AG04449 (cell line): ENCODE measurements at regions of chr1 and their contacts with region 1.

Region 1: DNA sequence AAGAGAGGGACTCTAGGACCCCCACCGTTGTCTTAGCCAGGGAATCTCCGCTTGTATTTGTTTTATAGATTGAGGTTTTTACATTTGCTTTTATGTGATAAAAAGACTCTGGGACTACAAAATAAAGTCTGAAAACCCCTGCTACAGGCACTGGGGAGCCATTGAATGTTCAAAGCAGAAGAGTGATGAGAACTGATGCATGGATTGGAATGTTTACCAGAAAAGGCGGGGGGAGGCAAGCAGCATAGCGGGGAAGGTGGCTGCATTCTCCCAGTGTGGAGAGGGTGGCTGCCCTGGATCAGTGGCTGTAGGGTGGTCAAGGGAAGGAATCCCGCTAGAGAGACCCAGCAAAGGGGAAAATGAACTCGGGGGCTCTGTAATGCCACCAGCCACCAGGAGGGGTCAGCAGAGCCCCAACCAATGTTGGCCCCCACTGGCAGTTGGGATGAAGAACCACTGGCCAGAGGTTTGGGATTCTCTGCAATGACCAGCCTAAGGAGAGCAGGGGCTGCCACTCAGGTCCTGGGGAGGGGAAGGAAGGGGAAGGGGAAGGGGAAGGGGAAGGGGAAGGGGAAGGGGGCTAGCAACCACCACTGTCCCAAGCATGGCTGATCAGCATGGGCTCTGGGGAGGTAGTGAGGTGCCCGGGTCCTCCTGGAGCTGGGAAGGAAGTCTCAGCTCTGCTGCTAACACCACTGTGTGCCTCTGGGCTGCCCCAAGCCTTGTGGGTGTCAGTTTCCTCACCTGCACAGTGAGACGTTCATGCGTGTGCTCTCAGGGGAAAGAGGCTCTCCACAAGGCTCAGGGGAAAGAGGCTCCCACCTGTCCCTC is 19.2 kb upstream of the PEF1 start:
- DNase-seq: no peak
- H3K4me3 ChIP-seq: no peak overlapping the region
- CTCF ChIP-seq: peak; percentile 86

Region 2: DNA sequence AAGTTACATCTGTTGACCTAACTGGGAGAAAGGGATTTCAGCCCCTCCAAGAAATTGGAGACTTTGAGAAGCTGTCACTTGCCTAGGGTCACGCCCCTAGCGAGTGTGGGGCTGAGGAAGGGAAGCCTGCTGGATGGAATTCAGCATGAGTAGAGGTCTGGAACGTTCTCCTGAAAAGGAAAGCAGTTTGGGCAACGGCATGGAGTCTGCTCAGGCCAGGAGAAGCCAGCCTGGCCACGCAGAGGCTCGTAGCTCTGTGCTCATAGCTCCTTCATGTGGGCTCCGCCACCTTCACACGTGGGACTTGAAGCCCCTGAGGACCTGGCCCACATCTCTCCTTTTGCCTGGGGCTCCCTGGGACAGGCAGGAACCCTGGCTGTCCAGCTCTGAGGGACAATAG is 17.6 kb after region 1 on chr1:
- CTCF ChIA-PET with region 1: interaction called, 33 read pairs
- POLR2A ChIA-PET with region 1: no interaction called
- DNase-seq: no peak
- H3K4me3 ChIP-seq: no peak overlapping the region
- CTCF ChIP-seq: no peak

Region 3: GRCh38 chr1:31705080-31705866 is 41.4 kb after region 1 on chr1:
- CTCF ChIA-PET with region 1: interaction called, 43 read pairs
- POLR2A ChIA-PET with region 1: interaction called, 3 read pairs
- DNase-seq: no peak
- H3K4me3 ChIP-seq: peak overlapping the region; percentile 80
- CTCF ChIP-seq: peak; percentile 61

Region 4: DNA sequence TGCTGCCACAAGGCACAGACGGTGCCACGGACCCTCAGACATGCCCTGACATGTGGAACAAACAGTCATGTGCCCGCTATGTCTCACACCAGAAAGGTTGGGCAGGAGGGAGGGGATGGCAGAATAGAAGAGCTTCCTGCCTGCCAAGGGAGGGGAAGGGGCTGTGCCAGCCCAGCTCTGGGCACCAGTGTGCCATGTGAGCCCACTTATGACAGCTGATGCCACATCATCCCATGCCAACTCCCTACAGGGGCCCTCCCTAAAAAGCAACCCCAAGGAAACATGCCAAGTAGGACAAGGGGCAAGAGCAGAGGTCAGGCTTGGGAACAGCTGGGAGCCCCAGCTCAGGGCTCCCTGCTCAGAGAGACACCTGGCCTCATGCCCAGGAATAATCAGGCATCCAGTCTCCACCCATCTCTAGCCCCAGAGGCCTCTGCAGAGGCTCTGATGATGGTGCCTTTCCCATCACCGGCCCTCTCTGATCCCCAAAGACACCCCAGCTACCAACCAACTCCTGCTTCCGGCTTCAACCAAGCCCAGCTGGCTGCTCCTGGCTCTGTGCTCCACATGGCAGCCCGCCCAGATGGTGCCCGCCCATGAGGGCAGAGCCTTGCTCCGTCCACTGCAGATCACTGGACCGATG is 90.0 kb after region 1 on chr1:
- CTCF ChIA-PET with region 1: interaction called, 107 read pairs
- POLR2A ChIA-PET with region 1: no interaction called
- DNase-seq: no peak
- H3K4me3 ChIP-seq: no peak overlapping the region
- CTCF ChIP-seq: no peak

Region 5: DNA sequence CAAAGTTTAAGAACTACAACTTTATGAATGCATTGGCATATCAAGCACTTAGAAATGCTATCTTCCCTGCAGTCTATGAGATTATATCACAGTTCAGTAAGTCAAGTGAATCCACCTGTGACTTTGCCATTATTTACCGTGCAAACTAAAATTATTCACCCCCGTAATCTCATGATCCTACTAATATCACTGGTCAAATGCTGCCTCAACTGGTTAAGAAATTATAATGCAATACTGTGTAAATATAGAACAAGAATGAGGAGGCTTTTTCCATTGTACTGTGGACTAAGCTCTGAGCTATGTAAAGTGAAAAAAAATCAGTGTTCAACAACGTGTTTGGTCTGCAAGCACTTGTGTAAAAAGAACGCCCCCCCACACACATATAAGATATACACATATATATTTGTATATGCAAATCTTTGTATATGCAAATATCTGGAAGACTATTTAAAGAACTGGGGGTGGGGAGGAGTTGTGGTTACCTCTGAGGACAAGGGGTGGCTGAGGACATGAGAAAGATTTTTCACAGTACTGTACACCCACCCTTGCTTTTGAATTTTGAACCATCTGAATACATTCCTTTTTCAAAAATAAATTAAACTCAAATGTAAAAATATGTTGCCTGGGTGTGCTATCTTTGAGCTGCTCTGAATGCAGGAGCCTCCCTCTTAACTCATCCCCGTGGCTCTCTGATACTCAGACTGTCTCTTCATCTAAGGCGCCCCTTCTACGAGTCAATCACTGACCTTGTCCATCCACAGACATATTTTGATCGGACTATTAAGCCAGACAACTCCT is 217.3 kb after region 1 on chr1:
- CTCF ChIA-PET with region 1: no interaction called
- POLR2A ChIA-PET with region 1: no interaction called
- DNase-seq: no peak
- H3K4me3 ChIP-seq: no peak overlapping the region
- CTCF ChIP-seq: no peak